ENCODE measurements at regions of chr18 and their contacts with region 1.

Region 1: GRCh38 chr18:64695851-64696553 is 547.1 kb upstream of the LINC00305 start:
- DNase-seq: no peak
- ATAC-seq: no peak
- H3K4me3 ChIP-seq: no peak overlapping the region
- H3K4me3 Mint-ChIP-seq: no peak overlapping the region
- H3K27ac ChIP-seq: no peak overlapping the region
- H3K27ac Mint-ChIP-seq: no peak overlapping the region
- H3K4me1 ChIP-seq: no peaks in the 10 kb centered on the region
- H3K4me1 Mint-ChIP-seq: no peaks in the 10 kb centered on the region
- H3K27me3 ChIP-seq: no peaks in the 10 kb centered on the region
- H3K27me3 Mint-ChIP-seq: no peaks in the 10 kb centered on the region
- CTCF ChIP-seq: no peak

Region 2: GRCh38 chr18:64639536-64639935 is 56.5 kb before region 1 on chr18:
- CTCF ChIA-PET with region 1: no interaction called
- POLR2A ChIA-PET with region 1: no interaction called
- intact Hi-C with region 1: loop called in 1 of 2 experiments (anchors 10 kb)
- DNase-seq: no peak
- ATAC-seq: no peak
- H3K4me3 ChIP-seq: no peak overlapping the region
- H3K4me3 Mint-ChIP-seq: no peak overlapping the region
- H3K27ac ChIP-seq: no peak overlapping the region
- H3K27ac Mint-ChIP-seq: no peak overlapping the region
- H3K4me1 ChIP-seq: no peaks in the 10 kb centered on the region
- H3K4me1 Mint-ChIP-seq: no peaks in the 10 kb centered on the region
- H3K27me3 ChIP-seq: no peaks in the 10 kb centered on the region
- H3K27me3 Mint-ChIP-seq: no peaks in the 10 kb centered on the region
- CTCF ChIP-seq: no peak

Region 3: DNA sequence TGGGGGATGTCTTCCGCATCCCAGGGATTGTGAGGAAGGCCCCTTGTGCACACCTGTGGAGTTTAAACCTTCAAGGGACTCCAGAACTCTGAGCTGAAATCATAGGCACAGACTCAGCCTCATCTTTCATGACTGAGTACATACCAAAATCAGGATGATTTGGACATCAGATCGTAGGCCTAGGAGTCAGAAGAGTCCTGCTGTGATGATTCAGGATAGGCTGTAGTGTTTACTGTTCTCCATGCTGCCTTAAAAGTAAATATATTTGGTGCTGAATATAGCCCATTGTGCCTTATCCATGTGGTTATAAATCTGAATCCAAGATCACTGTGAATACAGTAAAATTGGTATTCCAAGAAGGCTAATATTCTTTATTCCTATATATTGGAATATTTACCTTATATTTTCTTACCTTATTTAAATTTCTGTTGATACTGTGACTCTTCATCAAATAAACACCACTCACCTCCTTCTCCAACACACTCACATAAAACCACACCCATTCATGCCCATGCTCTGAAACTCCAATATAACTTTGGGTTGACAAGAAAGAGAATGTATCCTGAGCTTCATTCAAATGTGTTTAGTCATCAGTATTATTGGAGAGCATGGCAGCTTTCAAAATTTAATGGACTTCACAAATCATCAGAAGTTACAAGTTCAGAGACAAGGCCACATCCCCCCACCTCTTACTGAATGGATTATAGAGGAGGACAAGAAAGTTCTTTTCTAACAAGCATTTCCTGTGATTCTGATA is 14.3 kb after region 1 on chr18:
- CTCF ChIA-PET with region 1: no interaction called
- POLR2A ChIA-PET with region 1: no interaction called
- intact Hi-C with region 1: loop called in 1 of 2 experiments (anchors 2 kb)
- DNase-seq: no peak
- ATAC-seq: no peak
- H3K4me3 ChIP-seq: no peak overlapping the region
- H3K4me3 Mint-ChIP-seq: no peak overlapping the region
- H3K27ac ChIP-seq: no peak overlapping the region
- H3K27ac Mint-ChIP-seq: no peak overlapping the region
- H3K4me1 ChIP-seq: no peaks in the 10 kb centered on the region
- H3K4me1 Mint-ChIP-seq: no peaks in the 10 kb centered on the region
- H3K27me3 ChIP-seq: no peaks in the 10 kb centered on the region
- H3K27me3 Mint-ChIP-seq: no peaks in the 10 kb centered on the region
- CTCF ChIP-seq: no peak

Measured in CD8-positive, alpha-beta T cell (primary cell).